ENCODE measurements at regions of chr12 and their contacts with region 1.

Region 1: DNA sequence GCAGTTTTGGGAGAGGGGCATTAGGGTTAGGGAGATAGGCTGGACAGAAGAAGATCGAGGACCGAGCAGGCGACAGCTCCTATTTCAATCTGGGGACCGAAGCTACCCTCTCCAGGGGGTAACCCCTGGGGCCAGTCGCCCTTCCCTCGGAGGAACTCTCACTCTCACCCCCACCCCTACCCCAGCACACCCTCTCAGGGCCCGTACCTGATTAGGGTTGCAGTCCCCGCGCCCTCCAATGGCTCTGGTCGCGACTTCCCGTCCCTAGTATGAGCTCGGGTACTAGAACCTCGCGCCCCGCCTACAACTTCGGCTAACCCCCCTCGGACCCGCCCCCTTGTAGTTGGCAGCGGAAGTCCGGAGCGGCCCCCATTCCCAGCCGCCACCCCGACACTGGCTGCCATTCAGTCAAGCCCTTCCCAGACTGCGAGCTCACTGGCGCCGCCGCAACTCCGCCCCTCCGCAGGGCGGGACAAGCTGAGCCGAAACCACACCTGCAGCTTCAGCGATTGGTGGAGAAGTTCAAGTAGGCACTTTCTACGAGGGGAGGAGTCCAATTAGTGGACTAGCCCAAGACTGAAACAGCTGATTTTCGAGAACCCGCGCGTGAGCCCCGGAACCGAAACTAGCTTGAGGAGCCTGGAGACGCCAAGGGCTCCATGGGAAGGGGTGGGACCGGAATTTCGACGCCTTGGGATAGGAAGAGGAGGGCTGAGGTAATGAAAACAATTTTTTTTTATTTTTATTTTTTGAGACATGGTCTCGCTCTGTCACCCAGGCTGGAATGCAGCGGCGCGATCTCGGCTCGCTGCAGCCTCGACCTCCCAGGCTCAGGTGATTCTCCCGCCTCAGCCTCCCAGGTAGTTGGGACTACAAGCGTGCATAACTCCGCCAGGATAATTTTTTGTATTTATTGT is at the start of gene STAT2:
- DNase-seq: peak; percentile 100
- H3K4me3 Mint-ChIP-seq: peak within 1 kb of the TSS; percentile 97
- H3K27ac Mint-ChIP-seq: peak within 1 kb of the TSS; percentile 97
- H3K4me1 Mint-ChIP-seq: peaks cover 29% of the 10 kb centered on the region
- H3K27me3 Mint-ChIP-seq: no peaks in the 10 kb centered on the region
- total RNA-seq, gene STAT2: 70.2 and 71.3 TPM in 2 replicates

Region 2: GRCh38 chr12:56152318-56153033 is 207.6 kb before region 1 on chr12 and contains the start of gene MYL6B:
- intact Hi-C with region 1: loop called (anchors 1 kb)
- DNase-seq: peak; percentile 92
- H3K4me3 Mint-ChIP-seq: peak within 1 kb of the TSS; percentile 88
- H3K27ac Mint-ChIP-seq: peak within 1 kb of the TSS; percentile 99
- H3K4me1 Mint-ChIP-seq: peaks cover 39% of the 10 kb centered on the region
- H3K27me3 Mint-ChIP-seq: no peaks in the 10 kb centered on the region
- total RNA-seq, gene MYL6B: 58.8 and 67.6 TPM in 2 replicates

Region 3: DNA sequence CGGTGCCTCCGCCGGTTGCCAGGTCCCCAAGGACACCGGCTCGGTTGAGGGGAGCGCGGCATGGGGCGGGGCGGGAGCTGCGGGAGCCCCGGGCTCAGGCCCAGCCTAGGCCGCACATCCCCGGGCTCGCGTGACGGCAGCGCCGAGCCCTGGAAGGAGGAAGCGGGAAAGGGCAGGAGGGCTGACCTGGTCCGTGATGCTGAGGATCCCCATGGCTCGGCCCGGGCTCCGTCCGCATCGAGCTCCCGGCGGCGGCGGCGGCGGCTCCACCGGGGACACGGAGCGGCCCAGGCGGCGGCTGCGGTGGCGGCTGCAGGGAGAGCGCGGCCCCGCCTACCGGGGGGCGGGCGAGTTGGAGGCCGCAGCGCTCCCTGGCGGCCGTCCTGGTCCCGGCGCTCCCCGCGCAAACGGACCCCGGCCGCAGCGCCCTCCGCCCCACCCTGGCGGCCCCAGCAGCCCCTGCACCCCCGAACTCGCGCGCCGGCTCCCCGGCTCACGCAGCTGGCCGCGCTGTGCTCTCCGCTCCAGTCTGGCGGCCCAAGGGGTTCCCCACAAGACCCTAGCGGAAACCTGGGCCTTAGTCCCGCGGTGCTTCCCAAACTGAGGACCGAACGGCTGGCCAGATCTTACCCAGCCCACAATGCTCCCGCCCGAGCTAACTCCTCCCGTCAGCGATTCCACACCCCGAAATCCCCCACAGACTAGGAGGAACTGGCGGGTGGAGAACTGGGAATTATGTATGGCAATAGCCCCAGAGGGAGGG is 101.9 kb before region 1 on chr12 and contains the start of gene ANKRD52:
- intact Hi-C with region 1: loop called (anchors 2 kb)
- DNase-seq: peak; percentile 82
- H3K4me3 Mint-ChIP-seq: peak within 1 kb of the TSS; percentile 90
- H3K27ac Mint-ChIP-seq: peak within 1 kb of the TSS; percentile 83
- H3K4me1 Mint-ChIP-seq: peaks cover 22% of the 10 kb centered on the region
- H3K27me3 Mint-ChIP-seq: no peaks in the 10 kb centered on the region
- total RNA-seq, gene ANKRD52: 71.0 and 83.9 TPM in 2 replicates

Region 4: GRCh38 chr12:56299853-56300643 is 60.1 kb before region 1 on chr12 and contains the start of gene CS:
- intact Hi-C with region 1: loop called (anchors 1 kb)
- DNase-seq: peak; percentile 98
- H3K4me3 Mint-ChIP-seq: peak within 1 kb of the TSS; percentile 98
- H3K27ac Mint-ChIP-seq: peak within 1 kb of the TSS; percentile 90
- H3K4me1 Mint-ChIP-seq: peaks cover 51% of the 10 kb centered on the region
- H3K27me3 Mint-ChIP-seq: no peaks in the 10 kb centered on the region
- total RNA-seq, gene CS: 269 and 280 TPM in 2 replicates

Region 5: GRCh38 chr12:56333679-56334489 is 26.2 kb before region 1 on chr12 and contains the start of gene PAN2:
- intact Hi-C with region 1: loop called (anchors 1 kb)
- DNase-seq: peak; percentile 94
- H3K4me3 Mint-ChIP-seq: peak within 1 kb of the TSS; percentile 87
- H3K27ac Mint-ChIP-seq: peak within 1 kb of the TSS; percentile 100
- H3K4me1 Mint-ChIP-seq: peaks cover 42% of the 10 kb centered on the region
- H3K27me3 Mint-ChIP-seq: no peaks in the 10 kb centered on the region
- total RNA-seq, gene PAN2: 20.9 and 21.3 TPM in 2 replicates

Region 6: GRCh38 chr12:56374726-56375597 is 14.9 kb after region 1 on chr12:
- intact Hi-C with region 1: no loop called
- DNase-seq: no peak
- H3K4me3 Mint-ChIP-seq: no peak overlapping the region
- H3K27ac Mint-ChIP-seq: no peak overlapping the region
- H3K4me1 Mint-ChIP-seq: no peaks in the 10 kb centered on the region
- H3K27me3 Mint-ChIP-seq: peaks cover 14% of the 10 kb centered on the region

Region 7: GRCh38 chr12:56468216-56469006 is 108.3 kb after region 1 on chr12 and contains the start of gene SPRYD4:
- intact Hi-C with region 1: loop called (anchors 1 kb)
- DNase-seq: peak; percentile 94
- H3K4me3 Mint-ChIP-seq: peak within 1 kb of the TSS; percentile 99
- H3K27ac Mint-ChIP-seq: peak within 1 kb of the TSS; percentile 98
- H3K4me1 Mint-ChIP-seq: peaks cover 19% of the 10 kb centered on the region
- H3K27me3 Mint-ChIP-seq: no peaks in the 10 kb centered on the region
- total RNA-seq, gene SPRYD4: 5.0 and 5.5 TPM in 2 replicates

Region 8: DNA sequence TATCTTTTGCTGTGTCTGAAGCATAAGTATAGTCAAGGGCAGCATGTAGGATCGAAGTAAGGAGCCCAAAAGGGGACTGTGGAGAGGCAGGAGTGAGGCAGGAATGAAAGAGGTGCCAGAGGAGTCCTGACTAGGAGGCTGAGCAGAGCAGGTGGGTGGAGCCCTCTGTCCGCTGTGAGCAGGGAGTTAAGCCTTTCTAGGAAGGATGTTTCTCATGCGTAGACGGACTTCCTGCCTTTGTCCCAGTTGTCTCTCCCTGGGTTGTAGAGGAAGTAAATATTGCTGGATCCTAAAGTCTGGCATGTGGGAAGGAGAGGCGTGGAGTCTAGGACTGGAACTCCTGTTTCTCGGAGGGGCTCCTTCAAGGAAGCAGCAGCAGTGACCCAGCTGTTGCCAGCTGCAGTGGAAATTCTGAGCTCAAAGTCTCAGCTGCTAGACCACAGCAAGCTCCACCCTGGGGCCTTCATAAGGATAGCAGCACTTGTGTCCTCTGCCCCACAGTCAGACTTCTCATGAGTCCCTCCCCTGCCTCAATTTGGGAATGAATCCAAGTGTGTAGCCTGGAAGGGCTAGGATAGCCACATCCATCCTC is 205.5 kb after region 1 on chr12:
- intact Hi-C with region 1: no loop called
- DNase-seq: no peak
- H3K4me3 Mint-ChIP-seq: peak overlapping the region; percentile 11
- H3K27ac Mint-ChIP-seq: peak overlapping the region; percentile 32
- H3K4me1 Mint-ChIP-seq: peaks cover 30% of the 10 kb centered on the region
- H3K27me3 Mint-ChIP-seq: no peaks in the 10 kb centered on the region

Region 9: GRCh38 chr12:56724972-56725722 is 365.0 kb after region 1 on chr12 and contains the start of gene NACA:
- intact Hi-C with region 1: loop called (anchors 1 kb)
- DNase-seq: peak; percentile 98
- H3K4me3 Mint-ChIP-seq: peak within 1 kb of the TSS; percentile 91
- H3K27ac Mint-ChIP-seq: peak within 1 kb of the TSS; percentile 91
- H3K4me1 Mint-ChIP-seq: peaks cover 48% of the 10 kb centered on the region
- H3K27me3 Mint-ChIP-seq: peaks cover 1% of the 10 kb centered on the region
- total RNA-seq, gene NACA: 942 and 963 TPM in 2 replicates